CD8-positive, alpha-beta memory T cell (primary cell): ENCODE measurements at regions of chr1 and their contacts with region 1.

Region 1: GRCh38 chr1:84190455-84190854 is 46.4 kb downstream of the PRKACB start:
- DNase-seq: no peak
- H3K4me3 ChIP-seq: no peak overlapping the region
- H3K4me3 Mint-ChIP-seq: no peak overlapping the region
- H3K27ac ChIP-seq: no peak overlapping the region
- H3K27ac Mint-ChIP-seq: no peak overlapping the region
- H3K4me1 ChIP-seq: no peaks in the 10 kb centered on the region
- H3K4me1 Mint-ChIP-seq: peaks cover 17 to 27% (median 24%) of the 10 kb centered on the region in 3 donors
- H3K27me3 ChIP-seq: no peaks in the 10 kb centered on the region
- H3K27me3 Mint-ChIP-seq: no peaks in the 10 kb centered on the region

Region 2: GRCh38 chr1:84174051-84174556 is 16.4 kb before region 1 on chr1:
- CTCF ChIA-PET with region 1: no interaction called
- POLR2A ChIA-PET with region 1: interaction called, 13 read pairs
- DNase-seq: no peak
- H3K4me3 ChIP-seq: no peak overlapping the region
- H3K4me3 Mint-ChIP-seq: peak overlapping the region in 2 of 7 donors; percentile 2 to 31
- H3K27ac ChIP-seq: no peak overlapping the region
- H3K27ac Mint-ChIP-seq: peak overlapping the region in 1 of 8 donors; percentile 2
- H3K4me1 ChIP-seq: no peaks in the 10 kb centered on the region
- H3K4me1 Mint-ChIP-seq: peaks cover 59 to 81% (median 73%) of the 10 kb centered on the region in 3 donors
- H3K27me3 ChIP-seq: no peaks in the 10 kb centered on the region
- H3K27me3 Mint-ChIP-seq: no peaks in the 10 kb centered on the region